ENCODE measurements at regions of chr12 and their contacts with region 1.

Region 1: GRCh38 chr12:96303653-96304052 is 96.6 kb downstream of the CDK17 start:
- DNase-seq: no peak
- ATAC-seq: no peak
- H3K4me3 ChIP-seq: no peak overlapping the region
- H3K27ac ChIP-seq: no peak overlapping the region
- H3K4me1 ChIP-seq: peaks cover 9% of the 10 kb centered on the region
- H3K27me3 ChIP-seq: no peaks in the 10 kb centered on the region
- CTCF ChIP-seq: no peak

Region 2: DNA sequence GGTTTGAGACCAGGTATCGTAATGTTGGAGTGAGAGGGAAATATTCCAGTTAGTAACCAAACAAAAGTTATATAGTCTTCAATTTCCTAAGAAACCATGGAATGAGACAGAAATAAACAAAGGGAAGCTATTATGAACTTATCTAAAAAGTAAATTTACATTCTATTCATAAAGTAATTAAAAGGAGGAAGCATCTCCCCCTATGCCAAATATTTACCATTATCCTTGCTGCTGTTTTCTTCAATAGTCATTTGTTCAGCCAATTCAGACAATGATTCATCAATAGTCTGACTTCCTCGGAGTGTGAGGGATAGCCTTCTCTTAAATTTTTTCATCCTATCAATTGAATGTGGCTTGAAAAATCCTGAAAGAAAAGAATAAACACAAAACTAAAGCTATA is 30.8 kb after region 1 on chr12:
- CTCF ChIA-PET with region 1: interaction called, 10 read pairs
- POLR2A ChIA-PET with region 1: no interaction called
- intact Hi-C with region 1: no loop called
- DNase-seq: peak; percentile 25
- ATAC-seq: peak; percentile 83
- H3K4me3 ChIP-seq: no peak overlapping the region
- H3K27ac ChIP-seq: no peak overlapping the region
- H3K4me1 ChIP-seq: peaks cover 6% of the 10 kb centered on the region; the same call in 1 of the 2 replicates
- H3K27me3 ChIP-seq: no peaks in the 10 kb centered on the region
- CTCF ChIP-seq: no peak

Region 3: GRCh38 chr12:96516472-96517430 is 213.1 kb after region 1 on chr12:
- CTCF ChIA-PET with region 1: interaction called, 5 read pairs
- POLR2A ChIA-PET with region 1: no interaction called
- intact Hi-C with region 1: loop called (anchors 10 kb)
- DNase-seq: peak; percentile 91
- ATAC-seq: peak; percentile 69
- H3K4me3 ChIP-seq: peak overlapping the region; percentile 46
- H3K27ac ChIP-seq: no peak overlapping the region
- H3K4me1 ChIP-seq: peaks cover 10% of the 10 kb centered on the region; the same call in 1 of the 2 replicates
- H3K27me3 ChIP-seq: no peaks in the 10 kb centered on the region
- CTCF ChIP-seq: peak; percentile 88